Breast epithelium (tissue), 4 donors: ENCODE measurements at regions of chr19 and their contacts with region 1.

Region 1: GRCh38 chr19:17469481-17470067 is 750 bp upstream of the SLC27A1 start:
- DNase-seq: peak; percentile 97
- H3K4me3 ChIP-seq: peak overlapping the region; percentile 76 to 87 (median 85)
- H3K27ac ChIP-seq: peak overlapping the region; percentile 93 to 97
- H3K4me1 ChIP-seq: peaks cover 9 to 18% of the 10 kb centered on the region in 2 donors
- H3K27me3 ChIP-seq: no peaks in the 10 kb centered on the region
- CTCF ChIP-seq: peak in 1 of 3 donors; percentile 9
- POLR2A ChIP-seq: no peak

Region 2: DNA sequence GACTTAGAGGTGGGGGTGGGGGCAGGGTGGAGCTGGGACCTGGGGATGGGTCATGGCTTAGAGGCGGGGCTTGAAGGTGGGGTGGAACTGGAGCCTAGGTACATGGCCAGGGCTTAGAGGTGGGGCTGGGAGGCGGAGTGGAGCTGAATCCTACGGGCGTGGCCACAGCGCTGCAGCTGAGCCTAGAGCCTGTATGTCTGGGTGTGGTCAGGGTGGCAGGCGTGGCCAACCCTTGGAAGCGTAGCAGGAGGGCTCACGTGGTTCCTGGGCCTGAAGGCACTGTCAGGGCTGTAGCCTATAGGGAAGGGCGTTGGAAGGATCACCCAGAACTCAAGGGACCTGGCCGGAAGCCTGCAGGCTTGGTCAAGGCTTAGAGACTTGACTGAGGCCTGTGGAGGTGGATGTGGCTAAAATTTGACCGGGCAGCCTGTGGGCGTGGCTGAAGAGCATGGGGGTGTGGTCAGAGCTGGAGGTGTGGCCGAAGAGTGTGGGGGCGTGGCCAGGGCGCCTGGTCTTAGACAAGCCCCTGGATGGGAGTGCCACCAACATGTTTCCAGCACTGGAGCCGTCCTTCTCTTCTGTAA is 110.2 kb after region 1 on chr19:
- intact Hi-C with region 1: loop called (anchors 10 kb)
- DNase-seq: no peak
- H3K4me3 ChIP-seq: no peak overlapping the region
- H3K27ac ChIP-seq: no peak overlapping the region
- H3K4me1 ChIP-seq: no peaks in the 10 kb centered on the region
- H3K27me3 ChIP-seq: no peaks in the 10 kb centered on the region
- CTCF ChIP-seq: no peak
- POLR2A ChIP-seq: no peak

Region 3: GRCh38 chr19:18785179-18786128 is 1315.9 kb after region 1 on chr19:
- intact Hi-C with region 1: no loop called
- DNase-seq: peak in 1 of 2 donors; percentile 70
- H3K4me3 ChIP-seq: peak overlapping the region in 2 of 3 donors; percentile 18 to 46
- H3K27ac ChIP-seq: no peak overlapping the region
- H3K4me1 ChIP-seq: peaks cover 7 to 16% of the 10 kb centered on the region in 2 donors
- H3K27me3 ChIP-seq: peaks cover 25 to 47% of the 10 kb centered on the region in 2 donors
- CTCF ChIP-seq: no peak
- POLR2A ChIP-seq: no peak